ENCODE measurements at regions of chr7 and their contacts with region 1.

Region 1: GRCh38 chr7:39623018-39623731 is at the start of gene RALA:
- DNase-seq: peak; percentile 73 to 94
- H3K4me3 ChIP-seq: peak within 1 kb of the TSS; percentile 93 to 97
- H3K27ac ChIP-seq: peak within 1 kb of the TSS; percentile 81 to 92
- H3K4me1 ChIP-seq: peaks cover 9 to 11% of the 10 kb centered on the region in 2 donors
- H3K27me3 ChIP-seq: no peaks in the 10 kb centered on the region
- CTCF ChIP-seq: no peak
- total RNA-seq, gene RALA: 6.0 TPM

Region 2: DNA sequence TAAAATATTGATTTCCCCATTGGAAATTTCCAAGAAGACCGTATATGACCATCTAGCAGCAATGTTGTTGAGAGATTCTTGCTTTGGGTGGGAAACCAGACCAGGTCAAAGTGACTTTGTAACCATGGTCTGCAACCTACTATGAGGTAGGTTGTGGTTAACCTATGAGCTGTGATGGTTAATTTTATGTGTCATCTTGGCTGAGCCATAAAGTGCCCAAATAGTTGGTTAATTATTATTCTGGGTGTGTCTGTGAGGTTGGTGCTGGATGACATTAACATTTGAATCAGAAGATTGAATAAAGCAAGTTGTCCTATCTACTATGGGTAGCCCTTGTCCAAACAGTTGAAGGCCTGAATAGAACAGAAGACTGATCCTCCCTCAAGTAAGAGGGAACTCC is 18.1 kb before region 1 on chr7:
- intact Hi-C with region 1: no loop called
- DNase-seq: no peak
- H3K4me3 ChIP-seq: no peak overlapping the region
- H3K27ac ChIP-seq: no peak overlapping the region
- H3K4me1 ChIP-seq: no peaks in the 10 kb centered on the region
- H3K27me3 ChIP-seq: no peaks in the 10 kb centered on the region
- CTCF ChIP-seq: no peak

Region 3: GRCh38 chr7:39686261-39686924 is 63.2 kb after region 1 on chr7:
- intact Hi-C with region 1: no loop called
- DNase-seq: no peak
- H3K4me3 ChIP-seq: no peak overlapping the region
- H3K27ac ChIP-seq: no peak overlapping the region
- H3K4me1 ChIP-seq: peaks cover 0 to 16% of the 10 kb centered on the region in 2 donors
- H3K27me3 ChIP-seq: no peaks in the 10 kb centered on the region
- CTCF ChIP-seq: no peak

Region 4: DNA sequence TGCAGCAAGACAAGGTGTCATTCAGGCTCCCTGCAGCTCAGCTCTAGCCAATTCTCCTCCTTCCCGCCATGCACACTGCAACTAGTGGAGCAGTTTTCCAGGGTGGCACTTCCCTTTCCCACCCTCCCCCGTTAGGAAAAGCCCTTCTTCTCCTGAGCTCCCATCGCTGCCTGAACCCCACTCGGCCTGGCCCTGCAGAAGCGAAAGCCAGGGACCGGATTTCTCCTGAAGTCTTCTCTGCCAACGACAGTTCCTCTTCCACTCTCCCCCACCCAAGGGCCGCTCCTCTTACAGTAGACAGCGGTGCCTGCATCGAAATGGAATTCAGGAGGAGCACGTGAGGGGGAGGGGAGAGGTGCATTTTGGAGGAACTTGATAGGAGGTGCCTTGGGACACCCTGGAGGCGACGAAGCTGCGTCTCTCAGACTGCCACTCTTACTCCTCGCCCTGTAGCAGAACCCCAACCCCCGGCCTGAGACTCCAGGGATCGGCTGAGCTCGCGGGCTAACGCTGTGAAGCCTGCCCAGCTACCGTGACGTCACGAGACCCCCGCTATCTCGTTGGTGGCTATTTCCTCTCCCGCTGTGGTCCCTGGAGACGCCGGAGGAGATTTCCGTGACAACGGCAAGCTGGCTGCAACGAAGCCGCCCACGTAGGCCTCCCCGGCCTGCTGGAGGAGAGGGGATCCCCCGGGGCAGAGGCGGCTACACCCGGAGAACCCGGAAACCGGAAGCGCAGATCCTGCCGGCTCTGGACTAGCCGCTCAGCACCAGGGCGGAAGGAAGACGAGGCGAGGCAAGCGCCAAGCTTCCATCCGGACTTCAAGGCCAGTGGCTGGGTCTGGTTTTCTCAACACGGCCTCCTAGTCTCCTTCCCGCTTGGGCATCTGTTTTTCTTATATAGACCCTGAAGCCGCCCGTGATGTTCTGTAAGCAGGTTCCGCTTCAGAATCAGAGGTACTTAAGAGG is 109.9 kb after region 1 on chr7:
- intact Hi-C with region 1: loop called (anchors 1 kb)
- DNase-seq: peak; percentile 75 to 97
- H3K4me3 ChIP-seq: peak overlapping the region; percentile 66 to 76
- H3K27ac ChIP-seq: peak overlapping the region; percentile 78 to 81
- H3K4me1 ChIP-seq: peaks cover 0 to 9% of the 10 kb centered on the region in 2 donors
- H3K27me3 ChIP-seq: no peaks in the 10 kb centered on the region
- CTCF ChIP-seq: no peak

Region 5: DNA sequence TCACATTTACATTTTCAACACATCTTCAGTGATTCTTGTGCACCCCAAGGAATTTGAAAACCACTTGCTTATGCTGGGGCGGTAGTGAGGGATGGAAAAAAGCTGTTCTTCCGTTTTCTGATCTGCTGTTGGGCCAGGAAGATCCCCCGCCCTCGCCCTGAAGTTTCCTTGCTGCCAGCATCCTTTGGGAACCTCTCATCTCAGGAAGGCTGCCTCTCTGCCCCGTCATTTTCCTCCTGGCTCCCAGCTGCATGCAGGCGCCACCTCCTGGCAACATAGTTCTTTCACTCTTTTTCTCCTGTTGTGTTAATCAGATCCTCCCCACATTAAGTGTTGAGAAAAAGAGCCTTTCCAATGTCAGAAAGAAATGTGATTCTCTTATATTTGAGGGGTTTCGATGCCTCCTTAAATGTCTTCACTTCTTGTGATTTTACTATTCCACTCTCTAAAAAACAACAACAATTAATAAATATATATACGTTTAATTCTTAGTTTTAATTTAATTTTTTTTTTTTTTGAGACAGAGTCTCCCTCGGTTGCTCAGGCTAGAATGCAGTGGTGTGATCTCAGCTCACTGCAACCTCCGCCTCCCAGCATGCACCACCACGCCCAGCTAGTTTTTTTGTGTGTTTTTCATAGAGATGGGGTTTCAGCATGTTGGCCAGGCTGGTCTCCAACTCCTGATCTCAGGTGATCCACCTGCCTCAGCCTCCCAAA is 123.1 kb after region 1 on chr7:
- intact Hi-C with region 1: loop called (anchors 5 kb)
- DNase-seq: peak in 1 of 2 donors; percentile 86
- H3K4me3 ChIP-seq: no peak overlapping the region
- H3K27ac ChIP-seq: no peak overlapping the region
- H3K4me1 ChIP-seq: no peaks in the 10 kb centered on the region
- H3K27me3 ChIP-seq: no peaks in the 10 kb centered on the region
- CTCF ChIP-seq: peak; percentile 53 to 79 (median 72)

Region 6: GRCh38 chr7:40134428-40135316 is 511.5 kb after region 1 on chr7 and contains the starts of genes MPLKIP and SUGCT:
- intact Hi-C with region 1: loop called (anchors 5 kb)
- DNase-seq: peak; percentile 30 to 90
- H3K4me3 ChIP-seq: peak within 1 kb of the TSS; percentile 70 to 89
- H3K27ac ChIP-seq: peak within 1 kb of the TSS; percentile 87 to 90
- H3K4me1 ChIP-seq: peaks cover 0 to 19% of the 10 kb centered on the region in 2 donors
- H3K27me3 ChIP-seq: no peaks in the 10 kb centered on the region
- CTCF ChIP-seq: peak; percentile 87 to 99 (median 97)
- total RNA-seq, gene MPLKIP: 55.5 TPM
- total RNA-seq, gene SUGCT: 9.8 TPM